ENCODE measurements at regions of chr6 and their contacts with region 1.

Region 1: GRCh38 chr6:151044465-151045441 is 179.3 kb downstream of the MTHFD1L start:
- DNase-seq: peak; percentile 97
- H3K4me3 ChIP-seq: no peak overlapping the region
- H3K27ac ChIP-seq: peak overlapping the region; percentile 100
- H3K4me1 ChIP-seq: peaks cover 49% of the 10 kb centered on the region
- H3K27me3 ChIP-seq: no peaks in the 10 kb centered on the region
- CTCF ChIP-seq: no peak
- POLR2A ChIP-seq: peak; percentile 44

Region 2: GRCh38 chr6:150857062-150857944 is 187.4 kb before region 1 on chr6:
- CTCF ChIA-PET with region 1: no interaction called
- POLR2A ChIA-PET with region 1: no interaction called
- dilution Hi-C with region 1: no loop called
- intact Hi-C with region 1: loop called (anchors 2 kb)
- DNase-seq: peak; percentile 99
- H3K4me3 ChIP-seq: no peak overlapping the region
- H3K27ac ChIP-seq: peak overlapping the region; percentile 100
- H3K4me1 ChIP-seq: peaks cover 24% of the 10 kb centered on the region
- H3K27me3 ChIP-seq: no peaks in the 10 kb centered on the region
- CTCF ChIP-seq: no peak
- POLR2A ChIP-seq: peak; percentile 83

Region 3: GRCh38 chr6:150881911-150882481 is 162.8 kb before region 1 on chr6:
- CTCF ChIA-PET with region 1: no interaction called
- POLR2A ChIA-PET with region 1: no interaction called
- dilution Hi-C with region 1: no loop called
- intact Hi-C with region 1: loop called (anchors 1 kb)
- DNase-seq: peak; percentile 98
- H3K4me3 ChIP-seq: no peak overlapping the region
- H3K27ac ChIP-seq: peak overlapping the region; percentile 91
- H3K4me1 ChIP-seq: peaks cover 36% of the 10 kb centered on the region
- H3K27me3 ChIP-seq: no peaks in the 10 kb centered on the region
- CTCF ChIP-seq: no peak
- POLR2A ChIP-seq: no peak

Region 4: GRCh38 chr6:151004415-151005024 is 40.2 kb before region 1 on chr6:
- CTCF ChIA-PET with region 1: interaction called, 4 read pairs
- POLR2A ChIA-PET with region 1: no interaction called
- dilution Hi-C with region 1: no loop called
- intact Hi-C with region 1: loop called (anchors 1 kb)
- DNase-seq: peak; percentile 100
- H3K4me3 ChIP-seq: no peak overlapping the region
- H3K27ac ChIP-seq: peak overlapping the region; percentile 94
- H3K4me1 ChIP-seq: peaks cover 41% of the 10 kb centered on the region
- H3K27me3 ChIP-seq: no peaks in the 10 kb centered on the region
- CTCF ChIP-seq: no peak
- POLR2A ChIP-seq: peak; percentile 71

Region 5: DNA sequence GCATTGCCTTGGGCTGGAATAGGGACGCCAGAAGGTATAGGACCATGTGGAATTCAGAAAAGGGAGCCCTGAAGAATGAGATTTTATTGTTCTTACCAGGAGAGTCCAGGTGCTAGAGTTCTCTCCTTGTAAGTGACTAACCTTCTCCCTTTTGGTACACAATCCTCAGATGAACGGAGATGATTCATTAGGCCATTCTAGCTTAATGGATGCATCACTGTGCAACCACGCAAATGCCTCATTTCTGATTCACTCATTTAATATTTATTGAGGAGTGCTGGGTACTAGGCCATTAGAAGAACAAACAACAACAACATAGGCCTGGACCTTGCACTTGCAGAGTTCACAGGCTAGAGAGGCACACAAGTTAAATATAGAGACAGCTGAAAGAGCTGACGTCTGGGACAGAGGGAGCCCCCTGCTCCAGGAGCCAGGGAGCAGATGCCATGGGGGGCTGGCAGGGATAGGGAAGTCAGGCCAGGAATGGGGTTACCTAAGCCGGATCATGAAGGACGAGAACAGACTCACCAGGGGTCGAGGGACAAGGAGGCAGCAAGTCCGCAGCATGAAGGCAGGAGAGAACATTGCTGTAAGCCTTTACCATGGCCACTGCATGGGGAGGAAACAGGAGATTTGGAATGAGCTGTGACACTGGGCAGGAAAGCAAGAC is 15.5 kb after region 1 on chr6:
- CTCF ChIA-PET with region 1: interaction called, 4 read pairs
- POLR2A ChIA-PET with region 1: interaction called, 3 read pairs
- dilution Hi-C with region 1: no loop called
- intact Hi-C with region 1: loop called (anchors 1 kb)
- DNase-seq: peak; percentile 90
- H3K4me3 ChIP-seq: no peak overlapping the region
- H3K27ac ChIP-seq: peak overlapping the region; percentile 95
- H3K4me1 ChIP-seq: peaks cover 55% of the 10 kb centered on the region
- H3K27me3 ChIP-seq: no peaks in the 10 kb centered on the region
- CTCF ChIP-seq: no peak
- POLR2A ChIP-seq: no peak

Region 6: GRCh38 chr6:151141685-151142084 is 96.9 kb after region 1 on chr6:
- CTCF ChIA-PET with region 1: no interaction called
- POLR2A ChIA-PET with region 1: no interaction called
- dilution Hi-C with region 1: no loop called
- intact Hi-C with region 1: loop called (anchors 2 kb)
- DNase-seq: peak; percentile 61
- H3K4me3 ChIP-seq: no peak overlapping the region
- H3K27ac ChIP-seq: peak overlapping the region; percentile 63
- H3K4me1 ChIP-seq: peaks cover 12% of the 10 kb centered on the region
- H3K27me3 ChIP-seq: no peaks in the 10 kb centered on the region
- CTCF ChIP-seq: no peak
- POLR2A ChIP-seq: no peak

Region 7: DNA sequence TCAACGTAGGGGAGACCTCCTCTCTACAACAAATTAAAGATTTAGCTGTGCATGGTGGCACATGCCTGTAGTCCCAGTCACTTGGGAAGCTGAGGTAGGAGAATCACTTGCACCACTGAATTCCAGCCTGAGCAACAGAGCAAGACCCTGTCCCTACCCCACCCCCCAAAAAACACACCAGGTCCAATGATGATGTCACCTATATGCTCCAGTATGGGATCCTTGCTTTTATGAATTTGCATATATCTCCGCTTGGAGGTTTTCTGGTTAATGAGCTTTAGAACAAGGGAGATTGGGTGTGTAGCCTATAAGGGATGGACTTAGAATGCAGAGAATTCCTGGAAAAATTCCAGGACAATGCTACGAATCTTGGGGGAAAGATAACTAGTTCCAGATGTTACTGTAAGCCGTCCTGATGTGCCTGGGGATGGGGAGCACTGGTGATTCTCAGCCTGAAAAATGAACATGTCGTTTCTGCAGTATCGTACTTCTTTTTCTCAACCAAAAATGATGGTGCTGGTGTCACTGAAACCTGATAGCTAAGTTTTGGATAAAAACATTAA is 285.5 kb after region 1 on chr6:
- CTCF ChIA-PET with region 1: interaction called, 10 read pairs
- POLR2A ChIA-PET with region 1: interaction called, 10 read pairs
- dilution Hi-C with region 1: no loop called
- intact Hi-C with region 1: no loop called
- DNase-seq: no peak
- H3K4me3 ChIP-seq: no peak overlapping the region
- H3K27ac ChIP-seq: no peak overlapping the region
- H3K4me1 ChIP-seq: peaks cover 9% of the 10 kb centered on the region
- H3K27me3 ChIP-seq: no peaks in the 10 kb centered on the region
- CTCF ChIP-seq: no peak
- POLR2A ChIP-seq: no peak

Measured in endothelial cell of umbilical vein (primary cell).